Cardiac septum (tissue), 1 donor: ENCODE measurements at regions of chr12 and their contacts with region 1.

Region 1: DNA sequence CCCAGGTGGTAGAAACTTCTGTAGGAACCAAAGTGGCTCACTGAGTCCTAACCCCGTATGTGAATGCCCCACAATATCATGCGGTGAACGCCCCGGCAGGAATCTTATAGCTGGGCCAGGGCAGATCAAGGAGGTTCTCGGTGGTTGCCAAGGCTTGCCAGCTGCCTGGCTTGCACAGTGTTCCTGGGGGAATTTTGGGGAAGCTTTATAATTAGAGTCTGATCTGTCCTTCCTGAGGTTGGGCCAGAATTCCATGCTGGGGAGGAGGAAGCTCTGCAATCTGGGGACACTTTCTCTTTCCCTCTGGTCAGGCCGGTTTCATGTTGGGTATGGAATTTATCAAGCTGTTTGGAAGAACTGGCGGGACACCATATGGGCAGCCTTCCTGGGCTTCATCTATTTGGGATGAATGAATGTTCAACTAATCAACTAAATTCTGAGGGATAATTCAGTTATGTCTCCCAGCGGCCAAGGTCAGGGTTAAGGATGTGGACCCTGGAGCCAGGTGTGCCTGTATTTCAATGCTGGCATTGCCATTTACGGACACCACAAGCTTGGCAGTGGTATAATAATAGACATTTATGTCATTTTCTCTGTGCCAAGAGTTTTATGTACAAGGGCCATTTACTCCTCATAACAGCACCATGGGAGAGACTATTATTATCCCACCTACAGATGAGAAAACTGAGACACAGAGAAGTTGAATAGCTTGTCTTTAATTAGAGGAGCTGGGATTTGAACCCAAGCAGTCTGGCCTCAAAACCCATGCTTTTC is 54.3 kb downstream of the SVOP start:
- DNase-seq: no peak

Region 2: GRCh38 chr12:108980831-108981618 is 14.5 kb after region 1 on chr12:
- intact Hi-C with region 1: loop called (anchors 1 kb)
- DNase-seq: no peak